ENCODE measurements at regions of chr1 and their contacts with region 1.

Region 1: GRCh38 chr1:10494754-10495474 is 20.2 kb downstream of the PEX14 start:
- DNase-seq: peak; percentile 89
- ATAC-seq: peak; percentile 82
- H3K4me3 Mint-ChIP-seq: peak overlapping the region; percentile 73
- H3K27ac Mint-ChIP-seq: peak overlapping the region; percentile 88
- H3K4me1 Mint-ChIP-seq: peaks cover 55% of the 10 kb centered on the region
- H3K27me3 Mint-ChIP-seq: no peaks in the 10 kb centered on the region

Region 2: DNA sequence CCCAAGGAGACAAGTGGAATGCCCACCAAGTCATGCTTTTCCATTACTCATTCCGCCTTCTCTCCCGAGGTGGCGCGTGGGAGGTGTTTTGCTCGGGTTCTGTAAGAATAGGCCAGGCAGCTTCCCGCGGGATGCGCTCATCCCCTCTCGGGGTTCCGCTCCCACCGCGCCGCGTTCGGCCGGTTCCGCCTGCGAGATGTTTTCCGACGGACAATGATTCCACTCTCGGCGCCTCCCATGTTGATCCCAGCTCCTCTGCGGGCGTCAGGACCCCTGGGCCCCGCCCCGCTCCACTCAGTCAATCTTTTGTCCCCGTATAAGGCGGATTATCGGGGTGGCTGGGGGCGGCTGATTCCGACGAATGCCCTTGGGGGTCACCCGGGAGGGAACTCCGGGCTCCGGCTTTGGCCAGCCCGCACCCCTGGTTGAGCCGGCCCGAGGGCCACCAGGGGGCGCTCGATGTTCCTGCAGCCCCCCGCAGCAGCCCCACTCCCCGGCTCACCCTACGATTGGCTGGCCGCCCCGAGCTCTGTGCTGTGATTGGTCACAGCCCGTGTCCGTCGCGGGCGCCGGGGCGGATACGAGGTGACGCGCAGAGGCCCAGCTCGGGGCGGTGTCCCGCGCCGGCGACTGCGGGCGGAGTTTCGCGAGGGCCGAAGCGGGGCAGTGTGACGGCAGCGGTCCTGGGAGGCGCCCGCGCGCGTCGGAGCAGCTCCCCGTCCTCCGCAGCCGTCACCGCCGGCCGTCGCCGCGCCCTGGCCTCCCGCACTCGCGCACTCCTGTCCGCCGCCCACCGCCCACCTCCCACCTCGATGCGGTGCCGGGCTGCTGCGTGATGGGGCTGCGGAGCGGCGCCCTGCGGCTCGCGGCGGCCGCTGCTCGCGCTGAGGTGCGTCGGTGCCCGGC is 284.8 kb before region 1 on chr1 and contains the start of gene KIF1B:
- CTCF ChIA-PET with region 1: interaction called, 20 read pairs
- POLR2A ChIA-PET with region 1: no interaction called
- DNase-seq: peak; percentile 96
- ATAC-seq: peak; percentile 99
- H3K4me3 Mint-ChIP-seq: peak within 1 kb of the TSS; percentile 87
- H3K27ac Mint-ChIP-seq: peak within 1 kb of the TSS; percentile 74
- H3K4me1 Mint-ChIP-seq: peaks cover 27% of the 10 kb centered on the region
- H3K27me3 Mint-ChIP-seq: peaks cover 17% of the 10 kb centered on the region
- total RNA-seq, gene KIF1B: 9.2 to 9.6 TPM

Region 3: GRCh38 chr1:10407201-10407600 is 87.7 kb before region 1 on chr1:
- CTCF ChIA-PET with region 1: no interaction called
- POLR2A ChIA-PET with region 1: no interaction called
- DNase-seq: no peak
- ATAC-seq: no peak
- H3K4me3 Mint-ChIP-seq: no peak overlapping the region
- H3K27ac Mint-ChIP-seq: no peak overlapping the region
- H3K4me1 Mint-ChIP-seq: peaks cover 3% of the 10 kb centered on the region
- H3K27me3 Mint-ChIP-seq: no peaks in the 10 kb centered on the region

Region 4: GRCh38 chr1:10430216-10431069 is 64.5 kb before region 1 on chr1 and contains the start of gene CENPS:
- CTCF ChIA-PET with region 1: interaction called, 127 read pairs
- POLR2A ChIA-PET with region 1: interaction called, 14 read pairs
- DNase-seq: peak; percentile 93
- ATAC-seq: peak; percentile 89
- H3K4me3 Mint-ChIP-seq: peak within 1 kb of the TSS; percentile 93
- H3K27ac Mint-ChIP-seq: peak within 1 kb of the TSS; percentile 95
- H3K4me1 Mint-ChIP-seq: peaks cover 27% of the 10 kb centered on the region
- H3K27me3 Mint-ChIP-seq: no peaks in the 10 kb centered on the region
- total RNA-seq, gene CENPS: 18.3 to 21.9 TPM

Region 5: GRCh38 chr1:10451287-10451686 is 43.6 kb before region 1 on chr1:
- CTCF ChIA-PET with region 1: interaction called, 11 read pairs
- POLR2A ChIA-PET with region 1: no interaction called
- DNase-seq: no peak
- ATAC-seq: no peak
- H3K4me3 Mint-ChIP-seq: no peak overlapping the region
- H3K27ac Mint-ChIP-seq: no peak overlapping the region
- H3K4me1 Mint-ChIP-seq: no peaks in the 10 kb centered on the region
- H3K27me3 Mint-ChIP-seq: no peaks in the 10 kb centered on the region

Region 6: GRCh38 chr1:10472220-10473144 is 22.4 kb before region 1 on chr1 and contains the start of gene DFFA:
- CTCF ChIA-PET with region 1: interaction called, 14 read pairs
- POLR2A ChIA-PET with region 1: interaction called, 6 read pairs
- DNase-seq: peak; percentile 97
- ATAC-seq: peak; percentile 82
- H3K4me3 Mint-ChIP-seq: peak within 1 kb of the TSS; percentile 95
- H3K27ac Mint-ChIP-seq: peak within 1 kb of the TSS; percentile 95
- H3K4me1 Mint-ChIP-seq: peaks cover 47% of the 10 kb centered on the region
- H3K27me3 Mint-ChIP-seq: no peaks in the 10 kb centered on the region
- total RNA-seq, gene DFFA: 38.7 to 39.5 TPM

Region 7: DNA sequence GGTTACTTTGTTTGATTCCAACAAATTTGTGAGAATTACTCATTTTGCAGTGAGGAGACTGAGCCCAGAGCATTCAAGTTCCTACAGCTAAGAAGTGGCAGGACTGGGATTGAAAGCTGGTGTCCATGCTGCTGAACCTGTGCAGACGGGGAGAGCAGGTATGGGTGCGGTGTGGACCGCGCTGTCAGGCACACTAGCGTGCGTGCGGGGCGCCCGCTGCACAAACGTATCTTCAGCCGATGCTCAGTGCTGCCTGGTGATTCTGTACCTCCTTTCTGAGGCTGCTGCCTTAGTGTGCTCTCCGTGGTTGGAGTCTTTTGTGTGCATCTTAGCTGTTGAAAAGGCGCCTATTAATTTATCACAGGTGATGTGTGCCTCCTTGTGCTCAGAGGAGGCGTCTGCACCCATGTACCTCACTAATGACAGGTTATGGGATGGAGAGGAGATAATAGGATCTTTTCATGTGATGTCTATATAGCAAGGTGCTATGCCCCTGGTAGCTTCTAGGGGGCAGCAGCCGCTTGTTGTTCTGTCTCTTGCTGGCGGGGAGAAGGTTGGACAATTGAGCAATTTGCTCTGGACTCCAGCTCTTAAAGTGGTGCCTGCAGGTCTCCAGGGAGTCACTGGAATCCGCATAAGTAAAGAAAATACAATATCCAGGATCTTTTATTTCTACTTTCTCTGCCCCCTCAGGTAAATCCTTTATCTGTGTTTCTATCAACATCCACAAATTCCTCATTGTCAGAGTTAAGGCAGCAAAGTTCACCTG is 12.4 kb after region 1 on chr1:
- CTCF ChIA-PET with region 1: interaction called, 228 read pairs
- POLR2A ChIA-PET with region 1: interaction called, 7 read pairs
- DNase-seq: peak; percentile 74
- ATAC-seq: peak; percentile 46
- H3K4me3 Mint-ChIP-seq: no peak overlapping the region
- H3K27ac Mint-ChIP-seq: peak overlapping the region; percentile 15
- H3K4me1 Mint-ChIP-seq: peaks cover 54% of the 10 kb centered on the region
- H3K27me3 Mint-ChIP-seq: no peaks in the 10 kb centered on the region

Region 8: DNA sequence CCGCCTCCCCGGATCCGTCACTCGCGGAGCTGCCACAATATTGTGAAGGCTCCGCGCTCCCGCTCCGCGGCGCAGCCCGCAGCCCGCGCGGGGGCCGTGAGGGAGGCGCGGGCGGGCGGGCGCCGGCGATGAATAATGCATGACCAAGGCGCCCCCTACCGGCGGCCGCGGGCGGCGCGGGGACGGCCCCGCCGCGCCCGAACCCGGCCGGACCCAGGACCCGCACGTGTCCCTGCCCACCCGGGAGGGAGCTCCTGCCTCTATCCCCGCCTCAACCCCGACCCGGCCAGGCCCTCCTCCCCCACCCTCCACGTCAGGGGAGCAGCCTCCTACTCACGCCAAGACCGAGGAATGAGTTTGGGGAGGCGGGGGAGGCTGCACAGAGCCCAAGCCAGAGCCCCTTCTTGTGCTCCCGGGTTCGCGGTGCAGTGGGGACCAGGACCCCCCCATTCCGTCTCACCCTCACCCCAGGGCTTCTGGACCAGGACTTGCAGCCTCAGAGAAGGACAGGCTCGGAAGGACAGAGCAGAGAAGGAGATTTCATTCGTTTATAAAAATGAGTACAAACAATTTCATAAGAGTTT is 372.3 kb after region 1 on chr1:
- CTCF ChIA-PET with region 1: interaction called, 30 read pairs
- POLR2A ChIA-PET with region 1: no interaction called
- DNase-seq: peak; percentile 63
- ATAC-seq: peak; percentile 90
- H3K4me3 Mint-ChIP-seq: no peak overlapping the region
- H3K27ac Mint-ChIP-seq: no peak overlapping the region
- H3K4me1 Mint-ChIP-seq: peaks cover 13% of the 10 kb centered on the region
- H3K27me3 Mint-ChIP-seq: peaks cover 61% of the 10 kb centered on the region